ENCODE measurements at regions of chr13 and their contacts with region 1.

Region 1: GRCh38 chr13:91722267-91722884 is 324.0 kb downstream of the GPC5 start:
- DNase-seq: no peak
- ATAC-seq: no peak

Region 2: GRCh38 chr13:91313103-91313502 is 409.3 kb before region 1 on chr13:
- intact Hi-C with region 1: loop called in 1 of 2 experiments (anchors 10 kb)
- DNase-seq: no peak
- ATAC-seq: peak; percentile 30

Region 3: DNA sequence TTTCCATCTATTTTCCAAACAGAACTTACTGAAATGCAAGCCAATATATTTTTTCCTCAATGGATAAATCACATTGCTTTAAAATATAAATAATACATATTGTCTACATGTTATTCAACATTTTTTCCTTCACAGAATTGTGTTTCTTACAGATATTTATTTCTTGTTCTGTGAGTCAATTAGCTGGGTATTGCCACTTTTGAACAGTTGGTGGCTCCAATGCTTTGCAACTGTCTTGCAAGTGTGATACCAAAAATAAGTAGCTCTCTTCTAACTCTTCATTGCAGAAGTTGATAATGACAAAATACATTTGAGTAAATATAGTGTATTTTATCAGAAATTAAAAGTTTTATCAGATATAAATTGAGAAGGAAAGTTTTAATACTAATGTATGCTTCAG is 341.0 kb before region 1 on chr13:
- intact Hi-C with region 1: loop called in 1 of 2 experiments (anchors 10 kb)
- DNase-seq: no peak
- ATAC-seq: no peak

Region 4: GRCh38 chr13:91533354-91533753 is 189.0 kb before region 1 on chr13:
- intact Hi-C with region 1: no loop called
- DNase-seq: no peak
- ATAC-seq: no peak

Region 5: GRCh38 chr13:91882918-91883317 is 160.5 kb after region 1 on chr13:
- intact Hi-C with region 1: no loop called
- DNase-seq: no peak
- ATAC-seq: no peak

Measured in left colon (tissue), 2 donors.